HCT116 (cell line): ENCODE measurements at regions of chr11 and their contacts with region 1.

Region 1: DNA sequence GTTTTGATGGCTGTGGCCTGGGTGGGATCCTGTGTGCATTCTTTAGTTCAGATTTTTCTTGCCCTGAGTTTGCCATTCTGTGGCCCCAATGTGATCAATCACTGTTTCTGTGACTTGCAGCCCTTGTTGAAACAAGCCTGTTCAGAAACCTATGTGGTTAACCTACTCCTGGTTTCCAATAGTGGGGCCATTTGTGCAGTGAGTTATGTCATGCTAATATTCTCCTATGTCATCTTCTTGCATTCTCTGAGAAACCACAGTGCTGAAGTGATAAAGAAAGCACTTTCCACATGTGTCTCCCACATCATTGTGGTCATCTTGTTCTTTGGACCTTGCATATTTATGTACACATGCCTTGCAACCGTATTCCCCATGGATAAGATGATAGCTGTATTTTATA is 620 bp downstream of the OR4C16 start:
- DNase-seq: no peak
- ATAC-seq: no peak
- H3K4me3 ChIP-seq: no peak overlapping the region
- H3K27ac ChIP-seq: no peak overlapping the region
- H3K4me1 ChIP-seq: no peaks in the 10 kb centered on the region
- H3K27me3 ChIP-seq: no peaks in the 10 kb centered on the region
- CTCF ChIP-seq: no peak
- POLR2A ChIP-seq: no peak
- RAD21 ChIP-seq: no peak

Region 2: DNA sequence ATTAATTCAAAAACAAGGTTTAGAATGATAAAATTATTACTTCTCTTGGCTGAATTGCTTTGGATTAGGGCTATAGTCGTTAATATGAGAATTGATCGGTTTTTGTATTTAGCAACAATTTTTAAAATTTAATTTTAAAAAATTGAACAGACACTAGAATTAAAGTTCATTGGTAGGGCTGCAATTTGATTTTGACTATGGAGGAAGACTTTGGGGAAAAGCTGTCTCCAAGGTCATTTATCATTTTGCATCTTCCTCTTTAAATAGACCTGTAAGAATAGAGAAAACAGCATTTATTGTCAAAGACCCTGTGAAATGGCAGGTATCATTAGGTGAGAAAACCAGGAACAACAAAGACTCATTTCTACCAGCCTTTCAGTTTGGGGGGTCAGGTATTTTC is 75.5 kb after region 1 on chr11 and contains the start of gene OR4S2:
- CTCF ChIA-PET with region 1: no interaction called
- POLR2A ChIA-PET with region 1: no interaction called
- RAD21 ChIA-PET with region 1: no interaction called
- intact Hi-C with region 1: loop called (anchors 5 kb)
- DNase-seq: no peak
- ATAC-seq: no peak
- H3K4me3 ChIP-seq: no peak within 1 kb of the TSS
- H3K27ac ChIP-seq: no peak within 1 kb of the TSS
- H3K4me1 ChIP-seq: no peaks in the 10 kb centered on the region
- H3K27me3 ChIP-seq: no peaks in the 10 kb centered on the region
- CTCF ChIP-seq: no peak
- POLR2A ChIP-seq: no peak
- RAD21 ChIP-seq: no peak
- total RNA-seq, gene OR4S2: not detected

Region 3: DNA sequence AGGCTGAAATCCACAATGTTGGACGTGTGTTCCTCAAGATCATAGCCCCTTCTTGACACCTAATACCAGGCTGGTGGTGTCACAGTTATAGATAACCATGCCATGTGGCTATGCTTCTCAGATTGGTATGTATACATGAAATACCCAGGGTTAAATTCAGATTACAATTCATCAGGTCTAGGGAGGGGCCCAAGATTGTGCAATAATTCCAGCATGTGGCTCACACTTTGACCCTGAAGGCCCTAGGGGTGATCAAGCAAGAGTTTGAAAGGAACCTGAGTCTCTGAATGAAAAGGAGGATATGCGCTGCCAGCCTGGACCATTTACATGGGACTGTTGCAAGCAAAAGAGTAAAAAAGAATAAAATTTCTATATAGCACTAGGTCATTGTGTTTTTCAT is 96.8 kb after region 1 on chr11:
- CTCF ChIA-PET with region 1: no interaction called
- POLR2A ChIA-PET with region 1: no interaction called
- RAD21 ChIA-PET with region 1: no interaction called
- intact Hi-C with region 1: no loop called
- DNase-seq: no peak
- ATAC-seq: no peak
- H3K4me3 ChIP-seq: no peak overlapping the region
- H3K27ac ChIP-seq: no peak overlapping the region
- H3K4me1 ChIP-seq: no peaks in the 10 kb centered on the region
- H3K27me3 ChIP-seq: no peaks in the 10 kb centered on the region
- CTCF ChIP-seq: no peak
- POLR2A ChIP-seq: no peak
- RAD21 ChIP-seq: no peak

Region 4: DNA sequence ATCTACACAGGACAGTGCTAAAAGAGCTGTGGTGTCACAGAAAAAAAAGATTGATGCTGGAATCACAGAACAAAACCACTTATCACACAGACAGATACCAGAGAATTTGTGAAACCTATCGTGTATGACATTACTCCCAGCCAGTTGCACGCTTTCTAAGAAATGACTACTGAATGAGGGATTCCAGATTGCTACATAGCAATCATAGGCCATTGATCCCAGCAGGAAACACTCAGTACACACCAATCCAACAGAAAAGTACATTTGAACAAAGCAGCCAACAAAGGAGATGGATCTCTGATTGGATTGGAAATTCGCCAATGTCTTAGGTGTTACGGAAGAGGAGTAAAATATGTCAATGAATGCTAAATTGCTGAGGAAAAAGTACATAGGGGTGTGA is 724.4 kb after region 1 on chr11:
- CTCF ChIA-PET with region 1: no interaction called
- POLR2A ChIA-PET with region 1: no interaction called
- RAD21 ChIA-PET with region 1: no interaction called
- intact Hi-C with region 1: no loop called
- DNase-seq: no peak
- ATAC-seq: no peak
- H3K4me3 ChIP-seq: no peak overlapping the region
- H3K27ac ChIP-seq: no peak overlapping the region
- H3K4me1 ChIP-seq: no peaks in the 10 kb centered on the region
- H3K27me3 ChIP-seq: no peaks in the 10 kb centered on the region
- CTCF ChIP-seq: no peak
- POLR2A ChIP-seq: no peak
- RAD21 ChIP-seq: no peak